ENCODE measurements at regions of chr2 and their contacts with region 1.

Region 1: DNA sequence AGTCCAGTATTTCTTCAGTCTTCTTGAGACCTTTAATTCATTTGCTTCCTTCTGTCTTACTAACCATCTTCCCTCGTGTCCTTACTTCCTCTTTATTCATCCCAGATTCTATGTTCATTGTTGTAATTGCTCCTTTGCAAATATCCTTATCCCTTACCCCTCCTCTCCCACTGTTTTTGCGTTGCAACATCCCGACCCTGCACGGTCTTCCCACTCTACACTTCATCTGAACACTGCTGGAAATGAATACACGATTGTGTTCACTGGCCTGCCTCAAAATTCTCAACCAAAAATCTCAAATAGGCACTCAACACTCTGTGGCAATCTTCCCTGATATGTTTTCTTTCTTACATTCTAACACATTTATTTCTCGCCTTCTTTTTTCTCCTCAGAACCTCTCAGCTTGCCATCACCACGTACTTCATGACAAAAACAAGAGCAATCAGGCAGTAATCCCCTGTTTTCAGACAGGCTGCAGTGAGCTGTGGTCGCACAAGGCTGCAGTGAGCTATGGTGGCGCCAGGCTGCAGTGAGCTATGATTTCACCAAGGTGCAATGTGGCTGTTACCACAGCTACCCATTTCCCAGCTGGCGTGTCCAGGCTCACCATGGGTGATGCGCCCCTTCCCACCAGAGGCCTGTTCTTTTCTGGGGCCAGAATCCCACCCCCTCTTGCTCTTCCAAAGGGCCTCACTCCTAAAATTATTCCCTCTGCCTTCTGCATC is 25.7 kb downstream of the TCF23 start:
- DNase-seq: no peak
- ATAC-seq: peak; percentile 63; the same call in 1 of the 2 replicates
- H3K4me3 ChIP-seq: no peak overlapping the region
- H3K27ac ChIP-seq: no peak overlapping the region
- H3K4me1 ChIP-seq: no peaks in the 10 kb centered on the region
- H3K27me3 ChIP-seq: peaks cover 2% of the 10 kb centered on the region
- CTCF ChIP-seq: no peak

Region 2: DNA sequence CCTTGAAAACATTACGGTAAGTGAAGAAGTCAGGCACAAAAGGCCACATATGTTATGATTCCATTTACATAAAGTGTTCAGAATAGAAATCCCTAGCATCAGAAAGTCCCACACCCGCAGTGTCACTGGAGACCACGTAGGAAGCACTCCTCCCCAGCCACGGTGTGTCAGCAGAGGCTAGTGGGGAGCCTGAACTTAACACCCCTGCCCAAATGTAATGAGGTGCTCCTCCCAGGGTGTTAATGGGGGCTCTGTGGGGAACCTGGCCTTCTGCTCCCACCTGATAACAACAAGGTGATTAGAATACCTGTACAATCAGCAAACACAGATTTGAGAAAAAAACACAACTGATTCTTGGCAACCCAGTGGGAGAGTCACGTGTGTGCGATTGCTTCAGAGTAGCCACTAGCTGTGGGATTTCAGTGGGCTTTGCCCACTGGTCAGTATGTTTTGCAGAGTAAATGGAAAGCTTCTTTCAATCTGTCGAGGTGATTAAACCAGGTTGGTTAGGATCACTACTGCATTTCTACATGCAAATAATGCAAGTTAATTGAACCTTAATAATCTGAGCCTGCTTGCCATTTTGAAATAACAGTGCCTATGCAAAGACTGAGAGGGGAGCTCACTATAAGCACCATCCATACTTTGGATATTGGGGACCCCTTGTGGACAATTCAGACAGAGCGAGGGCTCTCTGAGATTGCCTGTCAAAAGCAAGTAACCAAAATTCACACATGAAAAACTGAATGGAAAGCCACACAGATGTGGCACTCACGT is 16.8 kb after region 1 on chr2:
- CTCF ChIA-PET with region 1: interaction called, 14 read pairs
- POLR2A ChIA-PET with region 1: no interaction called
- in situ Hi-C with region 1: no loop called
- intact Hi-C with region 1: no loop called
- DNase-seq: peak; percentile 43
- ATAC-seq: peak; percentile 95
- H3K4me3 ChIP-seq: no peak overlapping the region
- H3K27ac ChIP-seq: no peak overlapping the region
- H3K4me1 ChIP-seq: no peaks in the 10 kb centered on the region
- H3K27me3 ChIP-seq: no peaks in the 10 kb centered on the region
- CTCF ChIP-seq: peak; percentile 80

Region 3: DNA sequence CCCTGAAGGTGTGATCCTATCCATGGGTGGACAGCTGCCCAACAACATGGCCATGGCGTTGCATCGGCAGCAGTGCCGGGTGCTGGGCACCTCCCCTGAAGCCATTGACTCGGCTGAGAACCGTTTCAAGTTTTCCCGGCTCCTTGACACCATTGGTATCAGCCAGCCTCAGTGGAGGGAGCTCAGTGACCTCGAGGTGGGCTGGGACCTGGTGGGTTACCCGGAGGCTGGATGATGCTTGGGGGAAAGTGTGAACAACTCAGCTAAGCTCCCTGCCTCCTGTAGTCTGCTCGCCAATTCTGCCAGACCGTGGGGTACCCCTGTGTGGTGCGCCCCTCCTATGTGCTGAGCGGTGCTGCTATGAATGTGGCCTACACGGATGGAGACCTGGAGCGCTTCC is 58.9 kb after region 1 on chr2:
- CTCF ChIA-PET with region 1: interaction called, 10 read pairs
- POLR2A ChIA-PET with region 1: no interaction called
- in situ Hi-C with region 1: no loop called
- intact Hi-C with region 1: no loop called
- DNase-seq: no peak
- ATAC-seq: no peak
- H3K4me3 ChIP-seq: no peak overlapping the region
- H3K27ac ChIP-seq: no peak overlapping the region
- H3K4me1 ChIP-seq: no peaks in the 10 kb centered on the region
- H3K27me3 ChIP-seq: no peaks in the 10 kb centered on the region
- CTCF ChIP-seq: no peak

Region 4: GRCh38 chr2:27243391-27244130 is 69.1 kb after region 1 on chr2:
- CTCF ChIA-PET with region 1: no interaction called
- POLR2A ChIA-PET with region 1: no interaction called
- in situ Hi-C with region 1: no loop called
- intact Hi-C with region 1: no loop called
- DNase-seq: no peak
- ATAC-seq: no peak
- H3K4me3 ChIP-seq: no peak overlapping the region
- H3K27ac ChIP-seq: no peak overlapping the region
- H3K4me1 ChIP-seq: no peaks in the 10 kb centered on the region
- H3K27me3 ChIP-seq: no peaks in the 10 kb centered on the region
- CTCF ChIP-seq: no peak

Region 5: DNA sequence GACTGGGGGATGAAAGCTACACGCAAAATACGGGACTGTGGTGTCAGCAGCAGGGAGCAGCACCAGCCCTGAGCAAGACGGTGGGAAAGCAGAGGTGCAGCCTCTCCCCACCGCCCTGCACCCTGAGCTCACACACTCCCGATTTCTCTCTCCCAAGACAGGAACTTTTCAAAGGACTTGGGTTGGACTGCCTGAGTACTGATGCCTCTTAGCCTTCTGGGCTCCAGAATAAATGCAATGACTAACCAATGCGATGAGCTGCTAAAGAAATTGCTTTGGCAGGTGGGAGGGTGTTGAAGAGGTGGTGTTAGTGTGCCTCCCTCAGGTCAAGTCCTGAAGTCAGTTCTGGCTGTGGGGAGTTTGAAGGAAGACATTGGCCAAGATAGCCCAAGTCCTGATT is 117.4 kb after region 1 on chr2:
- CTCF ChIA-PET with region 1: no interaction called
- POLR2A ChIA-PET with region 1: no interaction called
- in situ Hi-C with region 1: no loop called
- intact Hi-C with region 1: no loop called
- DNase-seq: no peak
- ATAC-seq: peak; percentile 79
- H3K4me3 ChIP-seq: no peak overlapping the region
- H3K27ac ChIP-seq: no peak overlapping the region
- H3K4me1 ChIP-seq: peaks cover 6% of the 10 kb centered on the region
- H3K27me3 ChIP-seq: no peaks in the 10 kb centered on the region
- CTCF ChIP-seq: peak; percentile 50

Region 6: DNA sequence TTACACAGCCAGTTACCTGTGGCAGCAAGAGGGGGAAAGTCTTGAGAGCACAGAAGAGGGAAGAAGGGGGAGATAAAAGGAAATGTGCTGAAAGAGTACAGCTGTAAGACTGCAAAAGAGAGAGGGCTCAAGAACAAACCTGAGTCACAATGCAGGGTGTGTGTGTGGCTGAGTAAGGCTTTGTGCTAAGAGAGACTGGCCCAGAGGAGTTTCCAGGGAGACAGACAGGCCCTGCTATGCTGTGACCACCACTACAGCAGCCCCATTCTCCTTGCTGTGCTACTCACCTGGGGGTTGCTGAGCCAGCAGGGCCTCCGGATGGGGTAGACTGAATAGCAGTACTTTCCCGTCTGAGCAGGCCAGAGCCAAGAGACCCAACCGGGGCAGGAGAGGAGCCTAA is 160.8 kb after region 1 on chr2:
- CTCF ChIA-PET with region 1: interaction called, 10 read pairs
- POLR2A ChIA-PET with region 1: no interaction called
- in situ Hi-C with region 1: no loop called
- intact Hi-C with region 1: no loop called
- DNase-seq: no peak
- ATAC-seq: no peak
- H3K4me3 ChIP-seq: no peak overlapping the region
- H3K27ac ChIP-seq: no peak overlapping the region
- H3K4me1 ChIP-seq: no peaks in the 10 kb centered on the region
- H3K27me3 ChIP-seq: no peaks in the 10 kb centered on the region
- CTCF ChIP-seq: no peak

Region 7: DNA sequence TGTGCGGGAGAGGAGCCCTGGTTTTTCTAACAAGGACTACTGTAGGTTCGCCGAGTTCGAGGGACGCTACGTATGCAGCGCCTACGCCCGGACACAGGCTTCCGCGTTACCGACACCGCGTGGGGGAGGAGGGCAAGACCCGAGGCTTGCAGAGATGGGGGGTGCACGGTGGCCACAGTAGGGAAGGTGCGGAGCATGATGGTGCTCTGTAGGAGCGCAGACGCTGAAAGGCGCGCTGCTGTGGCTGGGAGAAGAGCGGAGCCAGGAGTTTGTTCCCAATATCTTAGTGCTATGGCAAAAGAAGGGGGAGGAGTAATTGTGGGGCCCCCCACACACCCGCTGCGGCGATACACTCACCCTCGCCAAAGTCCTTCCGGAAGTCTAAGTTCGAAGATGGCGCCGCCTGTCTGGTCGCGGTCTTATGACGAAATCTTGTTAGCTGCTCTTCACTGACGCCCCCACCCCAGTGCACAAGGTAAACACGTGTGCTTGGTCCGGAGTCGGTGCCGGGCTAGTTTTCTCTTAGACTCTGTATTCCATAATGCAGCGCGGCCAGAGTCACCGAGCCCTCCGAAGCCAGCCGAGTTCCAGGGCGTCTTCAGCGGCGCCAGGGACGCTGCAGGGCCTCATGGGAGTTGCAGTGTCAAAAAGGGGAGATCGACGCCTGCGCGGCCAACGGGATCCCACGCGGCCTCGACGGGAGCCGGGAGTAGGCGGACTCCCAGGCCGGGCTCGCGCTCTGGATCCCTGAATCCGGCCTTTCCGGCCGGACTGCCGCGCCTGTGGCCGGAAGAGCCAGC is 182.1 kb after region 1 on chr2 and contains the start of gene GTF3C2:
- CTCF ChIA-PET with region 1: no interaction called
- POLR2A ChIA-PET with region 1: no interaction called
- in situ Hi-C with region 1: no loop called
- intact Hi-C with region 1: no loop called
- DNase-seq: peak; percentile 91
- ATAC-seq: peak; percentile 95
- H3K4me3 ChIP-seq: peak within 1 kb of the TSS; percentile 62 to 99
- H3K27ac ChIP-seq: peak within 1 kb of the TSS; percentile 93
- H3K4me1 ChIP-seq: peaks cover 19% of the 10 kb centered on the region
- H3K27me3 ChIP-seq: no peaks in the 10 kb centered on the region
- CTCF ChIP-seq: no peak
- total RNA-seq, gene GTF3C2: 77.7 TPM

Measured in Panc1 (cell line).